ENCODE measurements at regions of chr6 and their contacts with region 1.

Region 1: GRCh38 chr6:41941280-41942066 is at the start of gene CCND3:
- DNase-seq: peak; percentile 96
- ATAC-seq: peak; percentile 79
- H3K4me3 Mint-ChIP-seq: peak within 1 kb of the TSS; percentile 100
- H3K27ac Mint-ChIP-seq: peak within 1 kb of the TSS; percentile 96
- H3K4me1 Mint-ChIP-seq: peaks cover 63% of the 10 kb centered on the region
- H3K27me3 Mint-ChIP-seq: no peaks in the 10 kb centered on the region
- total RNA-seq, gene CCND3: 625 to 806 TPM

Region 2: GRCh38 chr6:40315060-40315459 is 1626.4 kb before region 1 on chr6:
- CTCF ChIA-PET with region 1: no interaction called
- POLR2A ChIA-PET with region 1: no interaction called
- intact Hi-C with region 1: no loop called
- DNase-seq: no peak
- ATAC-seq: no peak
- H3K4me3 Mint-ChIP-seq: no peak overlapping the region
- H3K27ac Mint-ChIP-seq: no peak overlapping the region
- H3K4me1 Mint-ChIP-seq: no peaks in the 10 kb centered on the region
- H3K27me3 Mint-ChIP-seq: peaks cover 4% of the 10 kb centered on the region

Region 3: GRCh38 chr6:41787219-41787917 is 154.1 kb before region 1 on chr6 and contains the start of gene TOMM6:
- CTCF ChIA-PET with region 1: interaction called, 5 read pairs
- POLR2A ChIA-PET with region 1: no interaction called
- intact Hi-C with region 1: loop called (anchors 1 to 5 kb)
- DNase-seq: peak; percentile 98
- ATAC-seq: peak; percentile 86
- H3K4me3 Mint-ChIP-seq: peak within 1 kb of the TSS; percentile 96
- H3K27ac Mint-ChIP-seq: peak within 1 kb of the TSS; percentile 98
- H3K4me1 Mint-ChIP-seq: peaks cover 19% of the 10 kb centered on the region
- H3K27me3 Mint-ChIP-seq: peaks cover 2% of the 10 kb centered on the region
- total RNA-seq, gene TOMM6: 282 to 345 TPM

Region 4: DNA sequence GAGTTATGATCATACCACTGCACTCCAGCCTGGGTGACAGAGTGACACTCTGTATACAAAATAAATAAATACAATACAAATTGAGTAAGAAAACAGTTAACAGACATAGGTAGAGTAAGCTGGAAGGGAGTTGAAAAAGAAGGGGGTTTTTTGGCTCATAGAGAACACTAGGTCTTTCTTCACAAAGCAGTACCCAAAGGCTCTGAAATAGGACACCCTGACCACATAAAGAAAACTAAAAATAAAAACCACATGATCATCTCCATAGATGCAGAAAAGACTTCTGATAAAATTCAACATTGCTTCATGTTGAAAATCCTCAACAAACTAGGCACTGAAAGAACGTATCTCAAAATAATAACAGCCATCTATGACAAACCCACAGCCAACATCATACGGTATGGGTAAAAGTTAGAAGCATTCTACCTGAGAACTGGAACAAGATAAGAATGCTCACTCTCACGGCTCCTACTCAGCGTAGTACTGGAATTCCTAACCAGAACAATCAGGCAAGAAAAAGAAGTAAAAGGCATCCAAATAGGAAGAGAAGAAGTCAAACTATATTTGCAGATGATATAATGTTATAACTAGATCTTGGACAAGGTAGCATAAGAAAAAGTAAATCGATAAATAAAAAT is 105.3 kb before region 1 on chr6:
- CTCF ChIA-PET with region 1: no interaction called
- POLR2A ChIA-PET with region 1: no interaction called
- intact Hi-C with region 1: no loop called
- DNase-seq: no peak
- ATAC-seq: no peak
- H3K4me3 Mint-ChIP-seq: no peak overlapping the region
- H3K27ac Mint-ChIP-seq: no peak overlapping the region
- H3K4me1 Mint-ChIP-seq: no peaks in the 10 kb centered on the region
- H3K27me3 Mint-ChIP-seq: no peaks in the 10 kb centered on the region

Region 5: DNA sequence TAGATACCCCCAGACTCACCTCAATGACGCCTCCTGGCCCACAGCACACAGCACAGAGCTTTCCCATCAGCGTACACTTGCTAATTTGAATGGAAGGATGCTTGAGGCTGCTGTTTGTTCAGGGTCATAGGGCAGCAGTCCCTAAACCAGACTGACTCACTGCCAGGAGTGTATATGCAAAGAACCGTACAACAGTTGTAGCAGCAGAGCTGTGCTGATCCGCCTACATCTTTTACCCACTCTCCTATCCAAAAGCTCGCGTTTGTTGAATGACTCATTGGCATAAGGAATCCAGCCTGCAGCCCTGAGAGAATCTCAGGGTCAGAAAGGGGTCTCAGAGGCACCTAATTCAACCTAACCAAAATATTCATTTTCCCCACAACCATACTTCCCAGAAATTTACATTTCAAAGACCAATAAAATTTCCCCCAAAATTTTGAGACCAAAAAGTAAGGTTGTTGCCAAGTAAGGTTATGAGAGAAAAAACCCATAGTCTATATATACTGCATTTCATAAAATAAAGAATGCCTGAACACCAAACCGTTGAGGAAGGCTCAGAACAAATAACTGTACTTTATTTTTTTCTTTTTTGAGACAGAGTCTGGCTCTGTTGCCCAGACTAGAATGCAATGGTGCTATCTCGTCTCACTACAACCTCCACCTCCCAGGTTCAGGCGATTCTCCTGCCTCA is 35.5 kb after region 1 on chr6:
- CTCF ChIA-PET with region 1: interaction called, 4 read pairs
- POLR2A ChIA-PET with region 1: interaction called, 3 read pairs
- intact Hi-C with region 1: loop called in 1 of 2 experiments (anchors 2 kb)
- DNase-seq: peak; percentile 66
- ATAC-seq: peak; percentile 94
- H3K4me3 Mint-ChIP-seq: peak overlapping the region; percentile 71
- H3K27ac Mint-ChIP-seq: peak overlapping the region; percentile 99
- H3K4me1 Mint-ChIP-seq: peaks cover 78% of the 10 kb centered on the region
- H3K27me3 Mint-ChIP-seq: no peaks in the 10 kb centered on the region

Region 6: DNA sequence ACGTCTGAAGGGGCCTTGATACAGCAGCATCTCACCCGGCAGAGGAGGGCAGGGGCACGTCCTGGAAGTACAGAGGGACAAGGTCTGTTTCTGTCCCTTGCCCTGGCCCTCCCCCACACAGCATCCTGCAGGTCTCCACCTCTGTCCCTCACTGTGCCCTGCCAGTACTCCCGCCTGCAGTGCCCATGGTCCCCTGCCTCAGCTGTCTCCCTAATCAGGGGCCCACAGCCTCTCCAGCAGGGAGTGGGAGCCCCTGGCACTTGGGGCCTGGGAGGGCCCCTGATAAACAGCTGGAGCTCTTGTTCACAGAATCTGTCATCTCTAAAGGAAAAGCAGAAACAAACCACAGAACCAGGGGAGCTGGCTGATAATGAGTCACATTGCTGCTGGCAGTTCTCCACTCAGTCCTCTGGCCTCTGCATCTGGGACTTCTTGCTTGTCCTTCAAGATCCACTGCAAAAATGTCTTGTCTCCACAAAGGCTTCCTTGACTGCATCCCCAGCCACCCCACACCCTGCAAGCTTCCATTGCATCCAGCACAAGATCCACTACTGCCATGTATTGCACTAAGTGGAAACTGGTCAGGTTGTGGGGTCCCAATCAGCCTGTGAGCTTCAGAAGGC is 75.7 kb after region 1 on chr6:
- CTCF ChIA-PET with region 1: interaction called, 3 read pairs
- POLR2A ChIA-PET with region 1: interaction called, 3 read pairs
- intact Hi-C with region 1: loop called (anchors 1 to 5 kb)
- DNase-seq: peak; percentile 72
- ATAC-seq: peak; percentile 68
- H3K4me3 Mint-ChIP-seq: peak overlapping the region; percentile 49
- H3K27ac Mint-ChIP-seq: peak overlapping the region; percentile 96
- H3K4me1 Mint-ChIP-seq: peaks cover 72% of the 10 kb centered on the region
- H3K27me3 Mint-ChIP-seq: no peaks in the 10 kb centered on the region

Region 7: GRCh38 chr6:42050266-42051032 is 109.0 kb after region 1 on chr6 and contains the start of gene TAF8:
- CTCF ChIA-PET with region 1: interaction called, 355 read pairs
- POLR2A ChIA-PET with region 1: interaction called, 21 read pairs
- intact Hi-C with region 1: loop called in 1 of 2 experiments (anchors 1 kb)
- DNase-seq: peak; percentile 94
- ATAC-seq: peak; percentile 76
- H3K4me3 Mint-ChIP-seq: peak within 1 kb of the TSS; percentile 88
- H3K27ac Mint-ChIP-seq: peak within 1 kb of the TSS; percentile 96
- H3K4me1 Mint-ChIP-seq: peaks cover 64% of the 10 kb centered on the region
- H3K27me3 Mint-ChIP-seq: no peaks in the 10 kb centered on the region
- total RNA-seq, gene TAF8: 52.3 to 53.1 TPM

Region 8: GRCh38 chr6:42923666-42924065 is 982.2 kb after region 1 on chr6:
- CTCF ChIA-PET with region 1: no interaction called
- POLR2A ChIA-PET with region 1: no interaction called
- intact Hi-C with region 1: no loop called
- DNase-seq: no peak
- ATAC-seq: no peak
- H3K4me3 Mint-ChIP-seq: no peak overlapping the region
- H3K27ac Mint-ChIP-seq: no peak overlapping the region
- H3K4me1 Mint-ChIP-seq: peaks cover 5% of the 10 kb centered on the region
- H3K27me3 Mint-ChIP-seq: no peaks in the 10 kb centered on the region